PC-3 (cell line): ENCODE measurements at regions of chr7 and their contacts with region 1.

Region 1: DNA sequence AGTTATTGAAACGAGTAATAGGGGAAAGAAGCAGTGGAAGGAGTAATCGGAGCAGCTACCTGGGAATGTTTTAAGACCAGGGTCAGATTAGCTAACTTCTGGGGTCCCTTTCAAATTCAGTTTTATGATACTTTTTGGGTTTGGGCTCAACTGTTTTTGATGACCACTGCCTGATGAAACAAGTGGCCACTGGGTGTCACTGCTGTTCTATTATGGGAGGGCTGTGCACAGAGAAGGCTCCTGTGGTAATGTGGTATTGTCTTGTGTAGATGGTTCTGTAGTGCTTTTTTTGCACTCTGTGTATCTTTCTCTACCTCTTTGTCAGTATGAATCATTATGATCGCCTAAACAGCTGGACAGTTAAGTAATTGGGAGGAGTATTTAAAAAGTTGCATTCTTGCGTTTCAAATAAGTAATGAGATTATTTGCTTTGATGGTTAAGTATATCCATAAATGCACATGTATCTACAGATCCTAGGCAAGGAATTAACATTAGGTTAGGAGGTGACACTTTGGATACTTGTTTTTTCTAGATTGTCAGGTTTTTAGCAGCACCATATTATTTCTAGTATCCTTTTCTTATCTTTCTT is 128.4 kb downstream of the ABCA13 start:
- DNase-seq: peak; percentile 88
- ATAC-seq: peak; percentile 93
- H3K4me3 ChIP-seq: no peak overlapping the region
- H3K27ac ChIP-seq: peak overlapping the region; percentile 94
- H3K4me1 ChIP-seq: peaks cover 24% of the 10 kb centered on the region
- H3K27me3 ChIP-seq: no peaks in the 10 kb centered on the region
- CTCF ChIP-seq: peak; percentile 88

Region 2: DNA sequence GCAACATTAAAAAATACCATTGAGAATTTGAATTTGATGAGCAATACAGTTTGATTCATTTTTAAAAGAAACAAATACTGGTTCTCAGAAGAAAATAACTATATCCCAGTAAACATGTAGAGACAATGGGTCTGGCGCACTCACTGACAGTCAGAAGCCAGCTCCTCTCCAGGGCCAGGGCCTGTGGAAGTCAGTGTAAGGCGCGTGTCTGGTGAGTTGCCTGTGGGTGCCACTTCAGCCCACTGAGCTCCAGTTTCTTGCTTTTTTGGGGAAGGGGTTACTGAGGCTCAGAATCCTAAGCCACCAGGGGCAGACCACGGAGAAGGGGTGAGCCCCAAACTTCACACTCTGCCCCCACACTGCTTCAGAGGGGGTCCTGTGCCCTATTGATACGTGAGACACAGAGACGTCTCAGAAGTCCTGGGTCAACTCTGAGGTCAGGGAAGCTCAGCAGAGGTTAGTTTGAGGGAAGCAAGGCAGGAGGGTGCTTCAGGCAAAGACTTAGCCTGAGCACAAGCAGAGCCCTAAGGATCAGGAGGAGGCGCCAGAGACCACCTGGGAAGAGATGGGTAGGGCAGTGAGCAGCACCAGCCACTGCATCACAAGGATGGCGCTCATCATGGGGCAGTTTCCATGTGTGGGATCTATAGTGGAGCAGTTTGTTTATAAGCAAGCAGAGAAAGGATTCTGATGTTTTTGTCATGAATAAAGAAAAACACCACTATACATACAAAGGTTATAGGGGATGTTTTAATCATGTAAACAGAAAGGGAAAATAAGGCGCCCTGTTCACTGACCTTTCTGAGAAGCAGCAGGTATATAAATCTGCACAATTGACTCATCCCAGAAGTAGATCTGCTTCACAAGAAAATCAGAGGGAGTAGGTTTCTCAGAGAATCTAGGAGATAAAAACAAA is 447.1 kb before region 1 on chr7:
- CTCF ChIA-PET with region 1: no interaction called
- POLR2A ChIA-PET with region 1: no interaction called
- intact Hi-C with region 1: no loop called
- DNase-seq: peak; percentile 14
- ATAC-seq: peak; percentile 84
- H3K4me3 ChIP-seq: no peak overlapping the region
- H3K27ac ChIP-seq: no peak overlapping the region
- H3K4me1 ChIP-seq: no peaks in the 10 kb centered on the region
- H3K27me3 ChIP-seq: no peaks in the 10 kb centered on the region
- CTCF ChIP-seq: peak; percentile 43

Region 3: GRCh38 chr7:48154792-48155413 is 144.8 kb before region 1 on chr7:
- CTCF ChIA-PET with region 1: interaction called, 10 read pairs
- POLR2A ChIA-PET with region 1: no interaction called
- intact Hi-C with region 1: no loop called
- DNase-seq: peak; percentile 62
- ATAC-seq: peak; percentile 94
- H3K4me3 ChIP-seq: no peak overlapping the region
- H3K27ac ChIP-seq: no peak overlapping the region
- H3K4me1 ChIP-seq: 0 out of 2 replicates have a peak, but pooled peaks cover 9% of the 10 kb centered on the region
- H3K27me3 ChIP-seq: no peaks in the 10 kb centered on the region
- CTCF ChIP-seq: peak; percentile 83

Region 4: GRCh38 chr7:48173756-48174382 is 125.8 kb before region 1 on chr7:
- CTCF ChIA-PET with region 1: interaction called, 12 read pairs
- POLR2A ChIA-PET with region 1: interaction called, 3 read pairs
- intact Hi-C with region 1: no loop called
- DNase-seq: peak; percentile 69
- ATAC-seq: peak; percentile 82
- H3K4me3 ChIP-seq: peak overlapping the region; percentile 11; the same call in 1 of the 2 replicates
- H3K27ac ChIP-seq: peak overlapping the region; percentile 82
- H3K4me1 ChIP-seq: peaks cover 22% of the 10 kb centered on the region
- H3K27me3 ChIP-seq: no peaks in the 10 kb centered on the region
- CTCF ChIP-seq: no peak

Region 5: DNA sequence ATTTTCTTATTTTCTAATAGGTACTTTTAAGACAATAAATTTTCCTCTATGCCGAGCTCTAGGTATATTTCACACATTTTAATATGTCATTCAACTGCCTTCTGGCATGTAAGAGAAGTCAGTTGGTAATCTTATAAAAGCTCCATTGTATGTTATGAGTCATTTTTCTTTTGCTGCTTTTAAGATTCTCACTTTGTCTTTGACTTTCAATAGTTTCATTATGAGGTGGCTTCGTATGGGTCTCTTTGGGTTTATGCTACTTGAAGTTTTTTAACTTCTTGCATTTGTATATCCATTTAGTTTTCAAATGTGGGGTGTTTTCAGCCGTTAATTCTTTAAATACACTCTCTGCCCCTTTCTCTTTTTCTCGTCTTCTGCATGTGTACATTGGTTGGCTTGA is 47.9 kb before region 1 on chr7:
- CTCF ChIA-PET with region 1: interaction called, 3 read pairs
- POLR2A ChIA-PET with region 1: no interaction called
- intact Hi-C with region 1: loop called (anchors 1 kb)
- DNase-seq: peak; percentile 74
- ATAC-seq: peak; percentile 44
- H3K4me3 ChIP-seq: no peak overlapping the region
- H3K27ac ChIP-seq: peak overlapping the region; percentile 95
- H3K4me1 ChIP-seq: peaks cover 34% of the 10 kb centered on the region
- H3K27me3 ChIP-seq: no peaks in the 10 kb centered on the region
- CTCF ChIP-seq: no peak

Region 6: GRCh38 chr7:48360574-48360973 is 60.9 kb after region 1 on chr7:
- CTCF ChIA-PET with region 1: no interaction called
- POLR2A ChIA-PET with region 1: no interaction called
- intact Hi-C with region 1: loop called (anchors 5 kb)
- DNase-seq: peak; percentile 82
- ATAC-seq: peak; percentile 62
- H3K4me3 ChIP-seq: no peak overlapping the region
- H3K27ac ChIP-seq: peak overlapping the region; percentile 43
- H3K4me1 ChIP-seq: peaks cover 30% of the 10 kb centered on the region
- H3K27me3 ChIP-seq: no peaks in the 10 kb centered on the region
- CTCF ChIP-seq: no peak

Region 7: GRCh38 chr7:48637382-48637781 is 337.7 kb after region 1 on chr7:
- CTCF ChIA-PET with region 1: no interaction called
- POLR2A ChIA-PET with region 1: no interaction called
- intact Hi-C with region 1: loop called (anchors 10 kb)
- DNase-seq: peak; percentile 86
- ATAC-seq: peak; percentile 91
- H3K4me3 ChIP-seq: no peak overlapping the region
- H3K27ac ChIP-seq: peak overlapping the region; percentile 56
- H3K4me1 ChIP-seq: peaks cover 21% of the 10 kb centered on the region
- H3K27me3 ChIP-seq: no peaks in the 10 kb centered on the region
- CTCF ChIP-seq: no peak

Region 8: GRCh38 chr7:49166441-49166840 is 866.8 kb after region 1 on chr7:
- CTCF ChIA-PET with region 1: no interaction called
- POLR2A ChIA-PET with region 1: no interaction called
- intact Hi-C with region 1: loop called (anchors 5 kb)
- DNase-seq: peak; percentile 45
- ATAC-seq: peak; percentile 57
- H3K4me3 ChIP-seq: no peak overlapping the region
- H3K27ac ChIP-seq: no peak overlapping the region
- H3K4me1 ChIP-seq: no peaks in the 10 kb centered on the region
- H3K27me3 ChIP-seq: peaks cover 11% of the 10 kb centered on the region; the same call in 1 of the 2 replicates
- CTCF ChIP-seq: peak; percentile 58